CD4-positive, alpha-beta memory T cell (primary cell): ENCODE measurements at regions of chr6 and their contacts with region 1.

Region 1: GRCh38 chr6:138428944-138429598 is 25.0 kb downstream of the HEBP2 start:
- DNase-seq: peak in 4 of 5 donors; percentile 45 to 55 (median 46)
- H3K4me3 ChIP-seq: no peak overlapping the region
- H3K4me3 Mint-ChIP-seq: no peak overlapping the region
- H3K27ac ChIP-seq: no peak overlapping the region
- H3K27ac Mint-ChIP-seq: no peak overlapping the region
- H3K4me1 ChIP-seq: peaks cover 4% of the 10 kb centered on the region
- H3K4me1 Mint-ChIP-seq: no peaks in the 10 kb centered on the region
- H3K27me3 ChIP-seq: no peaks in the 10 kb centered on the region
- H3K27me3 Mint-ChIP-seq: peaks cover 0 to 1% of the 10 kb centered on the region in 2 donors

Region 2: GRCh38 chr6:138115877-138116660 is 313.0 kb before region 1 on chr6:
- CTCF ChIA-PET with region 1: interaction called, 54 read pairs
- POLR2A ChIA-PET with region 1: no interaction called
- intact Hi-C with region 1: loop called (anchors 1 kb)
- DNase-seq: peak; percentile 53 to 64 (median 62)
- H3K4me3 ChIP-seq: no peak overlapping the region
- H3K4me3 Mint-ChIP-seq: peak overlapping the region in 1 of 8 donors; percentile 20
- H3K27ac ChIP-seq: no peak overlapping the region
- H3K27ac Mint-ChIP-seq: no peak overlapping the region
- H3K4me1 ChIP-seq: no peaks in the 10 kb centered on the region
- H3K4me1 Mint-ChIP-seq: peaks cover 3 to 5% (median 4%) of the 10 kb centered on the region in 4 donors
- H3K27me3 ChIP-seq: no peaks in the 10 kb centered on the region
- H3K27me3 Mint-ChIP-seq: peaks cover 20 to 21% of the 10 kb centered on the region in 2 donors

Region 3: DNA sequence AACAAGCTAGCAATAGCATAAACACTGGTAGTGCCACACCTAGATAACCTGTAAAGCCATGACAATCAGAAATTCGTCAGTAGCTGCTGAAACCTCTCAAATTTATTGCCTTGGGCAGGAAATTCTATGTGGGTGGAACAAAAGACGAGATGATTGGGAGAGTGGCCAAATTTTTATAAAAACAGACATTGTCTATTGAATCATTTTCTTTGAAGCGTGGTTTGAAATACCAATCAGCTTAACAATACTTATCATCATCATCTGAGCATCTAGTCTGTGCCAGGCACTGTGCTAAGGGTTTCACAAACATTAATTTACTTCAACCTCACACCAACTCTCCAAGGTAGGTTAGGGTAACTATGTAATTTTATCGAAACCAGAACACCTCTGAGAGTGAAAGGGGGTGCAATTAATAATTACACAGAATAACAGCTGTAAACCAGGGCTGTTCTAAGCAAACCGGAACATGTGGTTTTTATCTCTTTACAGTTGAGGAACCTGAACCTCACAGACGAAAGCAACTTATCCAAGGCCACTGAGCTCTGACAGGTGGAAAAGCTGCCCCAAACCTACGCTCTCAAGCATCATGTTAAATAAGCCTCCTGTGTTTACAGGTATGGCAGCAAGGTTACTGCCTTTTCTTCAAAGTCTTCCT is 26.8 kb after region 1 on chr6:
- CTCF ChIA-PET with region 1: interaction called, 26 read pairs
- POLR2A ChIA-PET with region 1: interaction called, 9 read pairs
- intact Hi-C with region 1: loop called (anchors 2 kb)
- DNase-seq: peak; percentile 57 to 81 (median 74)
- H3K4me3 ChIP-seq: peak overlapping the region; percentile 12 to 47
- H3K4me3 Mint-ChIP-seq: peak overlapping the region; percentile 57 to 87 (median 72)
- H3K27ac ChIP-seq: peak overlapping the region; percentile 41
- H3K27ac Mint-ChIP-seq: peak overlapping the region; percentile 85 to 96 (median 89)
- H3K4me1 ChIP-seq: peaks cover 26% of the 10 kb centered on the region
- H3K4me1 Mint-ChIP-seq: peaks cover 13 to 37% (median 24%) of the 10 kb centered on the region in 4 donors
- H3K27me3 ChIP-seq: no peaks in the 10 kb centered on the region
- H3K27me3 Mint-ChIP-seq: no peaks in the 10 kb centered on the region

Region 4: GRCh38 chr6:138499303-138500018 is 70.4 kb after region 1 on chr6 and contains the start of gene NHSL1:
- CTCF ChIA-PET with region 1: interaction called, 18 read pairs
- POLR2A ChIA-PET with region 1: no interaction called
- intact Hi-C with region 1: no loop called
- DNase-seq: no peak
- H3K4me3 ChIP-seq: no peak within 1 kb of the TSS
- H3K4me3 Mint-ChIP-seq: no peak within 1 kb of the TSS
- H3K27ac ChIP-seq: no peak within 1 kb of the TSS
- H3K27ac Mint-ChIP-seq: no peak within 1 kb of the TSS
- H3K4me1 ChIP-seq: no peaks in the 10 kb centered on the region
- H3K4me1 Mint-ChIP-seq: peaks cover 0 to 3% (median under 1%) of the 10 kb centered on the region in 4 donors
- H3K27me3 ChIP-seq: no peaks in the 10 kb centered on the region
- H3K27me3 Mint-ChIP-seq: peaks cover 3 to 5% of the 10 kb centered on the region in 2 donors
- total RNA-seq, gene NHSL1: 0.53 to 0.58 TPM

Region 5: GRCh38 chr6:138509371-138509770 is 80.3 kb after region 1 on chr6:
- CTCF ChIA-PET with region 1: interaction called, 265 read pairs
- POLR2A ChIA-PET with region 1: interaction called, 7 read pairs
- intact Hi-C with region 1: loop called (anchors 1 kb)
- DNase-seq: peak; percentile 30 to 48 (median 43)
- H3K4me3 ChIP-seq: no peak overlapping the region
- H3K4me3 Mint-ChIP-seq: no peak overlapping the region
- H3K27ac ChIP-seq: no peak overlapping the region
- H3K27ac Mint-ChIP-seq: no peak overlapping the region
- H3K4me1 ChIP-seq: peaks cover under 1% of the 10 kb centered on the region
- H3K4me1 Mint-ChIP-seq: peaks cover 0 to 4% (median under 1%) of the 10 kb centered on the region in 4 donors
- H3K27me3 ChIP-seq: no peaks in the 10 kb centered on the region
- H3K27me3 Mint-ChIP-seq: peaks cover 0 to 1% of the 10 kb centered on the region in 2 donors

Region 6: GRCh38 chr6:138517635-138518034 is 88.6 kb after region 1 on chr6:
- CTCF ChIA-PET with region 1: interaction called, 265 read pairs
- POLR2A ChIA-PET with region 1: no interaction called
- intact Hi-C with region 1: loop called (anchors 1 kb)
- DNase-seq: peak; percentile 49 to 58 (median 51)
- H3K4me3 ChIP-seq: no peak overlapping the region
- H3K4me3 Mint-ChIP-seq: no peak overlapping the region
- H3K27ac ChIP-seq: no peak overlapping the region
- H3K27ac Mint-ChIP-seq: peak overlapping the region in 1 of 7 donors; percentile 29
- H3K4me1 ChIP-seq: peaks cover 5% of the 10 kb centered on the region
- H3K4me1 Mint-ChIP-seq: peaks cover 3 to 19% (median 10%) of the 10 kb centered on the region in 4 donors
- H3K27me3 ChIP-seq: no peaks in the 10 kb centered on the region
- H3K27me3 Mint-ChIP-seq: peaks cover 10% of the 10 kb centered on the region in 2 donors

Region 7: DNA sequence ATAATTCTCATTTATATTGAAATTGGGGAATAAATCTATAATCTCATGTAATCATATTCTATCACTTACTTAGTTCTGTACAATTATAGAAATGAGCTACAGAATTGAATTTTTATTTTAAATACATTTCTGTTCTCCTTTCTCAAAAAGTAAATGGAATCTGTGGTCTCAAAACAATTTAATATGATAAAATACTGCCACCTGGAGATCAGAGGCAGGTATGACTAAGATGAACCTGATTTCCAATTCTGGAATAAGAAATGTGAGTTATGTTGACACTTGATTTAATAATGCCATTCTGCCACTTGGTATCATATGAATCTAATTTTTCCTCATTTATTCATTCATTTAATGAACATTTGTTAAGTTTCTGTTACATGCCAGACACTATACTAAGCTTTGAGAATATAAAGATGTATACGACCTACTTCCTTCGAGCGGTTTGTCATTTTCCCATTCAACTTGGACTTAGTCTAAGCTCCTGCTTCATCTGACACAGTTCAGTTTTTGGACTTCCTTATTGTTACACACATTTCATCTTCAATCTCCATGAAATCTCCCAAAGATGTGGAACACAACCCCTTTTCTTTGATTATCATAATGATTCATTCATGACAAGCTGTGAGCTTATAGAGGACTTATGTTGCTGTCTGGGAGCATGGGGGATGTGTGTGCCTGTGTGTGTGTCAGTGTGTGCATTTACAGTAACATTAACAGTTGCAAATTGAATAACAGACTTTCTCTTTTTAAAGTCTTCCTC is 337.0 kb after region 1 on chr6:
- CTCF ChIA-PET with region 1: interaction called, 4 read pairs
- POLR2A ChIA-PET with region 1: no interaction called
- intact Hi-C with region 1: loop called (anchors 1 kb)
- DNase-seq: peak in 4 of 5 donors; percentile 31 to 36 (median 34)
- H3K4me3 ChIP-seq: no peak overlapping the region
- H3K4me3 Mint-ChIP-seq: no peak overlapping the region
- H3K27ac ChIP-seq: no peak overlapping the region
- H3K27ac Mint-ChIP-seq: no peak overlapping the region
- H3K4me1 ChIP-seq: no peaks in the 10 kb centered on the region
- H3K4me1 Mint-ChIP-seq: no peaks in the 10 kb centered on the region
- H3K27me3 ChIP-seq: no peaks in the 10 kb centered on the region
- H3K27me3 Mint-ChIP-seq: peaks cover 0 to 2% of the 10 kb centered on the region in 2 donors